Gastrocnemius medialis (tissue), 4 donors: ENCODE measurements at regions of chr6 and their contacts with region 1.

Region 1: DNA sequence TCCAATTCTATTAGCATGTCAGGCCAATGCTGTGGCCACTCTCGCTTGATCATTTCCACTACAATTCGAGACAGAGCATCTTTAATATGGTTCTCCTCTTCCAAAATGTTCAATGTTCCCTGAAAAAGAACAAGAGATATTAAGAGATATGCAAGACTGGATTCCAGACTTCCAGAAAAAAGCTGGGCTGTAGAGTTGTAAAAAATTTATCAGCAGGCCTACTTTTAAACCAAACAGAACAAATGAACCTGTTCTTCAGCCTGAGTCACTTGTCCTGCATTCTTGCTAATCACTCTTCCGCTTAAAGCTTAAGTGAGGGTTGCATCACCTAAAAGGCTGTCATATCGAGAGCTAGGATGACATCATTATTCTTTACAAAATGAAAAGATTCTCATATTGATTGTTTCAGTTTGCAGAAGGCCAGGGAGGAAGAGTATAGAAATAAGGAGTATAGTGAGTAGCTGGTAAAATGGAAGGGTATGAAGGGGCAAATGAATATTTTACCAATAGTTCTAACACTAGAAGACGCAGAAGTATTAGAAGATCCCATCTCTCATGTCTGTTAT is 4.9 kb downstream of the XPO5 start:
- DNase-seq: no peak
- ATAC-seq: no peak
- H3K4me3 ChIP-seq: no peak overlapping the region
- H3K27ac ChIP-seq: no peak overlapping the region
- H3K4me1 ChIP-seq: peaks cover 8 to 9% of the 10 kb centered on the region in 2 donors
- H3K27me3 ChIP-seq: no peaks in the 10 kb centered on the region
- CTCF ChIP-seq: no peak
- POLR2A ChIP-seq: no peak

Region 2: GRCh38 chr6:42629845-42630244 is 941.1 kb before region 1 on chr6:
- in situ Hi-C with region 1: loop called in 2 of 4 experiments (anchors 25 kb)
- intact Hi-C with region 1: no loop called
- DNase-seq: no peak
- ATAC-seq: no peak
- H3K4me3 ChIP-seq: no peak overlapping the region
- H3K27ac ChIP-seq: peak overlapping the region in 2 of 4 donors; percentile 9 to 14
- H3K4me1 ChIP-seq: peaks cover 19 to 22% of the 10 kb centered on the region in 2 donors
- H3K27me3 ChIP-seq: no peaks in the 10 kb centered on the region
- CTCF ChIP-seq: no peak
- POLR2A ChIP-seq: no peak

Region 3: DNA sequence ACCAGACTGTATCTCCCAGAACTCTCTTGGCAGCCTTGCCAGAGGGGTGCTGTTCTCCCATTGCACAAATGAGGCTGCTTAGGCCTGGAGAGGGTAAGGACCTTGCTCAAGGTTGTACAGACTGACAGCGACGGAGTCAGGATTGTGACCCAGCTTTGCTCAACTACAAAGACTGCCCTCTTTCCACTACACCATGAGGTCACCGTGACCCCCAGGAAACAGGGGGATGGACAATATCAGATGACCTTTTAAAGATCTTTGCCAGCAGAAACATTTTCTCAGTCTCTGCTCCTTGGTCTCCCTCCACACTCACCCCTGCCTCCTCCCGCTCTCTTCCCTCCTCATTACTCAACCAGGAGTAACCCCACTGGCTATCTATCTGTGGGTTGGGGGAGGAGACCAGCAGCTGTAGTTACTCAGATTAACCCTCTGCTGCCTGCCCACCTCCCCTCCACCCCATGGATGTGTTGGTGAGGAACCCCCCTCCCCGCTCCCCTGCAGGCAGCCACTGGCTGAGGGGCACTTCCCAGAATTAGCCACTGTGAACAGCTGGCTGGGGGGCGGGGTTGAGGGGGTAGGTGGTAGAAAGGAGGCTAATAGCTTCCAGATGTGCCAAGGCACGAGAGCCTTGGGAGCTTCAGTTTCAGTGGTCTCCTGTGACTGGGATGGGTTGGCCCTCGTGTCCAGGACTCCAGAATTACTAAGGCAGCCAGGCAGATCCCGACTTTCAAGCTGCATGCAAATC is 143.5 kb after region 1 on chr6:
- in situ Hi-C with region 1: no loop called
- intact Hi-C with region 1: no loop called
- DNase-seq: peak in 1 of 2 donors; percentile 46
- ATAC-seq: peak in 1 of 2 donors; percentile 24
- H3K4me3 ChIP-seq: no peak overlapping the region
- H3K27ac ChIP-seq: no peak overlapping the region
- H3K4me1 ChIP-seq: peaks cover 7 to 21% of the 10 kb centered on the region in 2 donors
- H3K27me3 ChIP-seq: no peaks in the 10 kb centered on the region
- CTCF ChIP-seq: no peak
- POLR2A ChIP-seq: no peak